ENCODE measurements at regions of chr19 and their contacts with region 1.

Region 1: GRCh38 chr19:40614622-40615411 is 13.6 kb downstream of the LTBP4 start:
- DNase-seq: peak; percentile 75
- H3K4me3 Mint-ChIP-seq: peak overlapping the region; percentile 97
- H3K27ac Mint-ChIP-seq: peak overlapping the region; percentile 100
- H3K4me1 Mint-ChIP-seq: peaks cover 41% of the 10 kb centered on the region
- H3K27me3 Mint-ChIP-seq: no peaks in the 10 kb centered on the region

Region 2: DNA sequence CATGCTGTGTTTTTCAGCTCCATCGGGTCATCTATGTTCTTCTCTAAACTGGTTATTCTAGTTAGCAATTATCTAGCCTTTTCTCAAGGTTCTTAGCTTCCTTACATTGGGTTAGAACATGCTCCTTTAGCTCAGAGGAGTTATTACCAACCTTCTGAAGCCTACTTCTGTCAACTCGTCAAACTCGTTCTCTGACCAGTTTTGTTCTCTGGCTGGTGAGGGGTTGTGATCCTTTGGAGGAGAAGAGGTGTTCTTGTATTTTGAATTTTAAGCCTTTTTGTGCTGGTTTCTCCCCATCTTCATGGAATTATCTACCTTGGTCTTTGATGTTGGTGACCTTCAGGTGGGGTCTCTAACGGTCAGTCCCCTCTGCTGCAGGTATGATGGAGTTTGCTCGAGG is 991.6 kb before region 1 on chr19:
- intact Hi-C with region 1: no loop called
- DNase-seq: no peak
- H3K4me3 Mint-ChIP-seq: no peak overlapping the region
- H3K27ac Mint-ChIP-seq: no peak overlapping the region
- H3K4me1 Mint-ChIP-seq: no peaks in the 10 kb centered on the region
- H3K27me3 Mint-ChIP-seq: peaks cover 19% of the 10 kb centered on the region

Region 3: DNA sequence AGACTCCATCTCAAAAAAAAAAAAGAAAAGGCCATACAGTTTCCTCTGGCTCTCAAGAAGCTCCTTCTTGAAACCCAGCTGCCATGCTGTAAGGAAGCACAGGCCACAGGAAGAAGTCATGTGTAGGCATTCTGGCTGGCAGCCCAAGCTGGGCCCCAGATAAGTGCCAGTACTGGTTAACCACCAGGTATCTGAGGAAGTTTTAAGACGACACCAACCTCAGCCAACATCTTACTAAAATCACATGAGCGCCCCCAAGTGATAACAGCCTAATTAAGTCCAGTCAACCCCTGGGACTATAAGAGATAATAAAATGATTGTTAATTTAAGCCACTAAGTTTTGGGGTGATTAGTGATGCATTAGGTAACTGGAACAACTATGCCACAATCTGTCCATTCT is 302.3 kb before region 1 on chr19:
- intact Hi-C with region 1: no loop called
- DNase-seq: no peak
- H3K4me3 Mint-ChIP-seq: no peak overlapping the region
- H3K27ac Mint-ChIP-seq: no peak overlapping the region
- H3K4me1 Mint-ChIP-seq: no peaks in the 10 kb centered on the region
- H3K27me3 Mint-ChIP-seq: no peaks in the 10 kb centered on the region

Region 4: DNA sequence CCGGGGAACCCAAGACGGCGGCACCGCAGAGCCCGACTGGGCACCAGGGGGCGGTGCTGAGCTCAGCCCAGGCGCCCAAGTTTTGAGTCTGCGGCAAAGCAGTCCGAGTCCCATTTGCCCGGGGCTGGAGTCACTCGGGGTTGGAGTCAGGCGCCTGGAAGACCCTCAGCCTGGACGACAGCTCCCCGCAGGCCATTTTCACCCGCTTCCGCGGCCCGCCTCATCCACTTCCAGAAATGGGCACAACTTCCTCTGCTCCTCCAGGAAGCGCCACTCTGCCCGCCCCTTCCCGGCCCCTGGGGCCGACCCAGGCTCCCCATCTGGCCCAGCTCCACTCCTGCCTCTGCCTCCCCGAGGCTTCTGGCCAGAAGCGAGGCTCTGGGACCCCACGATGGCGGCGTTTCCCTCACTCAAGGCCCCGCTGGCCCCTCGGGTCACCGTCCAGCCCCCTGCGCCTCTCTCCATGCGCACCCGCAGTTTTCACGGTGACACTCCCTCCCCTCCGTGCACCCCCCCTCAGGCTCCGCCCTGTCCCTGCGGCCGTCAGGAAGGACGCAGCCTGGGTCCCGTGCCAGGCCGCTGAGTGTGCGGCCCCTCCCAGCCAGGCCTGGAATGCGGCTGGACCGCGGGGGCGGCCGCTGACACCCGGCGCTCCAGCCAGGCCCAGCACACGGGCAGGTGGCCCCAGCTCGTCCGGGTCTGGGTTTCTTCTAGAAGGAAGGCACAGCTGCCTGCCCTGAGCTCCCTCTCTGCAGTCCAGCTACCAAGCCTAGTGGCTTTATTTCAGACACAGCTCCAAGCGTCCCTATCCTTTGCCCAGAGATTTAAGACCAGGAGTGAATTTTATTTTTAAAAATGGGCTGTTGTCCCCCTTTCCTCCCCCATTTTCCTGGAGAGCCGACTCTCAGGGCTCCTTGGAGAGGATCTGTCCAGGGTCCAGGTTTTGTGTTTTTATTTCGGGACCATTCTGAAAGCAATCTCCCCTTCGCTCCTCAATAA is 193.8 kb before region 1 on chr19:
- intact Hi-C with region 1: no loop called
- DNase-seq: peak; percentile 72
- H3K4me3 Mint-ChIP-seq: peak overlapping the region; percentile 82
- H3K27ac Mint-ChIP-seq: peak overlapping the region; percentile 90
- H3K4me1 Mint-ChIP-seq: peaks cover 20% of the 10 kb centered on the region
- H3K27me3 Mint-ChIP-seq: no peaks in the 10 kb centered on the region

Region 5: GRCh38 chr19:40576585-40577451 is 38.0 kb before region 1 on chr19 and contains the start of gene SHKBP1:
- intact Hi-C with region 1: loop called (anchors 1 kb)
- DNase-seq: peak; percentile 92
- H3K4me3 Mint-ChIP-seq: peak within 1 kb of the TSS; percentile 86
- H3K27ac Mint-ChIP-seq: peak within 1 kb of the TSS; percentile 71
- H3K4me1 Mint-ChIP-seq: peaks cover 17% of the 10 kb centered on the region
- H3K27me3 Mint-ChIP-seq: no peaks in the 10 kb centered on the region
- total RNA-seq, gene SHKBP1: 102 and 113 TPM in 2 replicates

Region 6: DNA sequence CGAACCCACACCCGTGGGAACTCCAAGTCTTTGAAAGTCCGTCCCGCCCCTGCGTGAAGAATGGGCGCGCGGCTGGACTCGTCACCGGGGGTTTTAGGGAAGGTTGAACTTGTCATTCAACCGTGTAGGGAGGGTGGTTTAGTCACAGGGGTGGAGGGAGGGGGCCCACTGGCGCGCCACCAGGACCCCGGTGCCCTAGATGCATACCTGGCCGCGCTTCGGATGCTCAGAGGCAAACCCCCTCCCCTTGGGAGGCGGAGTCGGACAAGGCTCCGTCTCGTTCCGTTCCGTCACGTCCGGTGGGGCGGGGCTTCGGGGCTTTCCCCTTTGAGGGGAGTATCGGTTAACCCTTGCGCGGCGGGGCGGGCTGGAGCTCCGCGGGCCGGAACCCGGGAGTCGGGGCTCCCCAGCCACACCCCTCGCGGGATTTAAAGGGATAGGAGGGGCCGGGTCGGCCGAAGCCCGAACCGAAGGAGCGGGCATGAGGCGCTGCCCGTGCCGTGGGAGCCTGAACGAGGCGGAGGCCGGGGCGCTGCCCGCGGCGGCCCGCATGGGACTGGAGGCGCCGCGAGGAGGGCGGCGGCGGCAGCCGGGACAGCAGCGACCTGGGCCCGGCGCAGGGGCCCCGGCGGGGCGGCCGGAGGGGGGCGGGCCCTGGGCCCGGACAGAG is 102.0 kb after region 1 on chr19 and contains the starts of genes COQ8B and ITPKC:
- intact Hi-C with region 1: loop called (anchors 1 kb)
- DNase-seq: peak; percentile 100
- H3K4me3 Mint-ChIP-seq: peak within 1 kb of the TSS; percentile 97
- H3K27ac Mint-ChIP-seq: peak within 1 kb of the TSS; percentile 95
- H3K4me1 Mint-ChIP-seq: peaks cover 44% of the 10 kb centered on the region
- H3K27me3 Mint-ChIP-seq: no peaks in the 10 kb centered on the region
- total RNA-seq, gene COQ8B: 38.4 and 41.6 TPM in 2 replicates
- total RNA-seq, gene ITPKC: 8.7 and 9.9 TPM in 2 replicates

Measured in activated T-helper 1 cell treated with anti-CD3 and anti-CD28 coated beads, Interleukin-12 subunit alpha, Interleukin-12 subunit beta, Interleukin-2, Interleukin-4 antibody, amounts not matched to agents 30 ng/mL and 10 ng/mL and 1 ng/mL, durations not matched to agents 14 hours and 24 hours and 36 hours (primary cell).